AG04450 (cell line): ENCODE measurements at regions of chr1 and their contacts with region 1.

Region 1: GRCh38 chr1:193299038-193299437 is 112.6 kb upstream of the B3GALT2 start:
- DNase-seq: no peak
- H3K4me3 ChIP-seq: no peak overlapping the region
- H3K27ac ChIP-seq: no peak overlapping the region
- H3K27me3 ChIP-seq: no peaks in the 10 kb centered on the region
- CTCF ChIP-seq: no peak

Region 2: DNA sequence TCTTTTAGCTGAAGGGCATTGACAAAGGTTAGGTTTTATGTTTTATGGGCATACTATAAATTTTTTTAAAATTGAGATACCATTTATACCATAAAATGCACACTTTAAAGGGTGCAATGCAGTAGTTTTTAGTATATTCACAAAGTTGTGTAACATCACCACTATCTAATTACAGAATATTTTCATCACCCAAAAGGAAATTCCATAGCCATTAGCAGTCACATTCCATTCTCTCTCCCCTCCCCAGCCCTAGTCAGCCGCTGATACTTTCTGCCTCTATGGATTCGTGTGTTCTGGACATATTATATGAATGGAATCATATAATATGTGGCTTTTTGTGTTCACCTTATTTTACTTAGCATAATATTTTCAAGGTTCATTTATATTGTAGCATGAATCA is 23.2 kb after region 1 on chr1:
- CTCF ChIA-PET with region 1: interaction called, 10 read pairs
- POLR2A ChIA-PET with region 1: no interaction called
- DNase-seq: peak; percentile 51
- H3K4me3 ChIP-seq: no peak overlapping the region
- H3K27ac ChIP-seq: peak overlapping the region; percentile 57
- H3K27me3 ChIP-seq: no peaks in the 10 kb centered on the region
- CTCF ChIP-seq: no peak

Region 3: GRCh38 chr1:193574913-193575312 is 275.9 kb after region 1 on chr1:
- CTCF ChIA-PET with region 1: no interaction called
- POLR2A ChIA-PET with region 1: no interaction called
- DNase-seq: no peak
- H3K4me3 ChIP-seq: no peak overlapping the region
- H3K27ac ChIP-seq: no peak overlapping the region
- H3K27me3 ChIP-seq: no peaks in the 10 kb centered on the region
- CTCF ChIP-seq: no peak